HEK293 (cell line): ENCODE measurements at regions of chr17 and their contacts with region 1.

Region 1: DNA sequence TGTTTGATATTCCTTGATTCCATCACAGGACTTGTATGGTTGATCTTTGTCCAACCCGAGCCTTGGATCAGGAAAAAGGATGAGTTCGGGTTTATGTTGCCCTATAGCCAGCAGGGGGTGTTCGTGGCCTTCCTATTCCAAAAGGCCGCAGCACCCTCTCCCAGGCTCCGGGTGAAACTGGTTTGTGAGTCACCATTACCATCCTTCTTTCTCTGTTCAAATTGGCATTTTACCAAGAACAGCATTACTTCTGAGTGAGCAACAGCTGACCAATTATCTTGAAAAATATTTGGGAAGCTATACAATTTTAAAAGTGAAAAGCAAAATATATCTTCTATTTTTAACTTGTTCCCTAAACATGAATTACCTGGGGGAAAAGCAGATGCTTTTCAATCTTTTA is 24.3 kb upstream of the KRT20 start:
- H3K4me3 ChIP-seq: no peak overlapping the region
- H3K27ac ChIP-seq: no peak overlapping the region
- H3K4me1 ChIP-seq: peaks cover 6% of the 10 kb centered on the region; the same call in 1 of the 2 replicates
- CTCF ChIP-seq: peak; percentile 45; the same call in 1 of the 2 replicates

Region 2: DNA sequence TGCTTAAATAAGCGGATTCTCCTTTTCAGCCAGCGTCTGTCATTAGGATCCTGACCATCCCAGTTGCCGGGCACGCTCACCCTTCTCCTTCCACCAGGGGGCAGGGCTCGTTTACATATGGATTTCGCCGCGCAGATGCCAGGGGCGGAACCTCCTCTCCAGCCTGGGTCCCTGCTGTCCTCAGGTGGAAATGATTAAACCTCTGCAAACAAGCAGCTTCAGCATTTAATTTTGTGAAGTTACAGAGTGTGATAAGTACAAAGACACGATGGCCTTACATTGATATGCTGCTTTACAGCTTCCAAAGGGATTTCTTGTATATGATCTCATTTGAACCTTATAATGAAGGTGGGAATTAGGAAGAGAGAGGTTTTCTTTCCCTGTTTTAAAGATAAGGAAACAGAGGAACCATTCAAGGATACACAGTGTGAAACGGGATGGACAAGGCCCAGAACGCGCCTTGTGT is 105.7 kb before region 1 on chr17:
- CTCF ChIA-PET with region 1: interaction called, 10 read pairs
- POLR2A ChIA-PET with region 1: no interaction called
- H3K4me3 ChIP-seq: no peak overlapping the region
- H3K27ac ChIP-seq: no peak overlapping the region
- H3K4me1 ChIP-seq: no peaks in the 10 kb centered on the region
- CTCF ChIP-seq: peak; percentile 71; the same call in 1 of the 2 replicates

Region 3: GRCh38 chr17:40922239-40922638 is 12.9 kb after region 1 on chr17:
- CTCF ChIA-PET with region 1: interaction called, 11 read pairs
- POLR2A ChIA-PET with region 1: no interaction called
- H3K4me3 ChIP-seq: no peak overlapping the region
- H3K27ac ChIP-seq: no peak overlapping the region
- H3K4me1 ChIP-seq: no peaks in the 10 kb centered on the region
- CTCF ChIP-seq: no peak

Region 4: GRCh38 chr17:40963838-40964237 is 54.5 kb after region 1 on chr17:
- CTCF ChIA-PET with region 1: interaction called, 10 read pairs
- POLR2A ChIA-PET with region 1: no interaction called
- H3K4me3 ChIP-seq: no peak overlapping the region
- H3K27ac ChIP-seq: no peak overlapping the region
- H3K4me1 ChIP-seq: no peaks in the 10 kb centered on the region
- CTCF ChIP-seq: no peak

Region 5: GRCh38 chr17:40974366-40974765 is 65.0 kb after region 1 on chr17:
- CTCF ChIA-PET with region 1: no interaction called
- POLR2A ChIA-PET with region 1: no interaction called
- H3K4me3 ChIP-seq: no peak overlapping the region
- H3K27ac ChIP-seq: no peak overlapping the region
- H3K4me1 ChIP-seq: no peaks in the 10 kb centered on the region
- CTCF ChIP-seq: no peak

Region 6: GRCh38 chr17:40993839-40994238 is 84.5 kb after region 1 on chr17 and contains the start of gene KRTAP3-3:
- CTCF ChIA-PET with region 1: no interaction called
- POLR2A ChIA-PET with region 1: no interaction called
- H3K4me3 ChIP-seq: no peak within 1 kb of the TSS
- H3K27ac ChIP-seq: no peak within 1 kb of the TSS
- H3K4me1 ChIP-seq: no peaks in the 10 kb centered on the region
- CTCF ChIP-seq: no peak

Region 7: GRCh38 chr17:41496820-41497408 is 587.6 kb after region 1 on chr17:
- CTCF ChIA-PET with region 1: interaction called, 12 read pairs
- POLR2A ChIA-PET with region 1: no interaction called
- H3K4me3 ChIP-seq: no peak overlapping the region
- H3K27ac ChIP-seq: no peak overlapping the region
- H3K4me1 ChIP-seq: peaks cover 6% of the 10 kb centered on the region
- CTCF ChIP-seq: peak; percentile 95